ENCODE measurements at regions of chr10 and their contacts with region 1.

Region 1: GRCh38 chr10:35635576-35635975 is 6.5 kb downstream of the FZD8 start:
- DNase-seq: peak in 1 of 5 donors; percentile 29
- ATAC-seq: peak; percentile 56 to 73 (median 62)
- H3K4me3 ChIP-seq: no peak overlapping the region
- H3K27ac ChIP-seq: no peak overlapping the region
- H3K4me1 ChIP-seq: peaks cover 0 to 35% (median 10%) of the 10 kb centered on the region in 12 donors
- H3K27me3 ChIP-seq: peaks cover 0 to 22% (median 0%) of the 10 kb centered on the region in 9 donors
- CTCF ChIP-seq: peak; percentile 83 to 98 (median 92)
- POLR2A ChIP-seq: no peak

Region 2: DNA sequence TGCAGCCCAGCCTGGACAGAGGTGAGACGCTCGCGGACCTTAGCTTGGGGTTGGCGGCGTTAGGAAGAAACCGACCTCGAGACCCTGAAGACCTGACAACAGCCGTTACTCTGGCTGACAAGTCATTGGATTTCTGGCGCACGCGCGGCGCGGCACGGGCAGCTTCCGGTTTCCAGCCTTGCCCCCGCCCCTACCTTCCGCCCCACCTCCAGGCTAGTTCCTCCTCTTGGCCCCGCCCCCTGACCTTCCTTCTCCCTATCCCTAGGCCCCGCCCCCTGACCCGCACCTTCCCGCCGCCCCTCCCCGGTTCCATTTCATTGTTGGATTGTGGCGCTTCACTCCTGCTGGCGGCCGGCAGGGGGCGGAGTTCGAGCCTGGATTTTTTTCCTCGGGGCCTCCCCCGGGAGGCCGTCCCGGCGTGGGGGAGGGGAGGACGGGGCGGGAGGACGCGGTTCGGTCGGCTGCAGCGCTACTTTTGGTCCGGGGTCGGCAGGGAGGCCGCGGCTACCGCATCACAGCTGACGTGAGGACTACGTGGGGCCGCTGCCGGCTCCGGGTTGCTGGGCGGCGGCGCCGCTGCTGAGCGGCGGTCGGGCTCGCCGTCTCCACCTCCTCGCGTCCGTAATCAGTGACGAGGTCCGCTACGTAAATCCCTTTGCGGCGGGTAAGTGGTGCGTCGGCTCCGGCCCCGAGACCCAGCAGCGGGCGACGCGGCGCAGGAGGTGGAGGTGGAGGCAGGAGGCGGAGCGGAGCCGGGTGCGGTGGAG is 508.9 kb before region 1 on chr10 and contains the start of gene CREM:
- intact Hi-C with region 1: loop called in 1 of 10 experiments (anchors 10 kb)
- DNase-seq: peak; percentile 99 to 100 (median 100)
- ATAC-seq: peak; percentile 95 to 97 (median 96)
- H3K4me3 ChIP-seq: peak within 1 kb of the TSS; percentile 68 to 91 (median 84)
- H3K27ac ChIP-seq: peak within 1 kb of the TSS; percentile 97 to 100 (median 100)
- H3K4me1 ChIP-seq: peaks cover 0 to 44% (median 7%) of the 10 kb centered on the region in 12 donors
- H3K27me3 ChIP-seq: no peaks in the 10 kb centered on the region
- CTCF ChIP-seq: peak; percentile 71 to 96 (median 88)
- POLR2A ChIP-seq: peak; percentile 97 to 100
- total RNA-seq, gene CREM: 44.7 to 66.5 (median 54.7) TPM

Region 3: GRCh38 chr10:36504758-36505157 is 869.2 kb after region 1 on chr10:
- intact Hi-C with region 1: loop called in 8 of 10 experiments (anchors 5 to 10 kb)
- DNase-seq: no peak
- ATAC-seq: peak in 2 of 4 donors; percentile 26 to 45
- H3K4me3 ChIP-seq: no peak overlapping the region
- H3K27ac ChIP-seq: no peak overlapping the region
- H3K4me1 ChIP-seq: peaks cover 0 to 3% (median 0%) of the 10 kb centered on the region in 12 donors
- H3K27me3 ChIP-seq: no peaks in the 10 kb centered on the region
- CTCF ChIP-seq: peak in 7 of 12 donors; percentile 8 to 44 (median 36)
- POLR2A ChIP-seq: no peak

Region 4: DNA sequence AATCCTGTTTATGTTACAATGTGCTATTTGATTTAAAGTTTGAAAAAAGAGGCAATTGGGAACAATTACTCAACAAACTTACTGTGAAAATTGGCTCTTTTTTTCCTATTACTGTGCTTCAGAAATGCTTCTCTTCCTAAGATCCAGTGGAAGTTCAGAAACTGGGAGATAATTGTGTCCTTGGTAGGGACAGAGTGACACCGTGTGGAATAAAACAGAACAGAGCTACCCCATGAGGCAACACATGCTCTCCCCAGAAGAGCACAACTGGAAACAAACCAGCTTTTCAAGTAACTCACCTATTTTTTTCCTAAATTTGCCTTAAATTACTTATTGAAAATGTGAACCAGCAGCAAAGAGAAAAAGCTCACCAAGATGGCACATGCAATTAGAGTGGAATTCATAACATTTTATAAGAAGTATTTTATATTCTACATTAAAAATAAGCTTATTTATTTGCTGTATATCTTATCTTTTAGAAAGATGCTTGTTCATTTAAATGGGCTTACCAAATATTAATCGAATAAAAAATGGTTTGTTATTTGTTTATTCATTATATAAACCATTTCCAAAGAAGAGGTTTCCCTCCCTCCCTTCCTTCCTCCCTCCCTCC is 1143.8 kb after region 1 on chr10:
- intact Hi-C with region 1: loop called (anchors 1 to 2 kb)
- DNase-seq: peak in 2 of 5 donors; percentile 19 to 26
- ATAC-seq: peak; percentile 88 to 92 (median 92)
- H3K4me3 ChIP-seq: no peak overlapping the region
- H3K27ac ChIP-seq: no peak overlapping the region
- H3K4me1 ChIP-seq: peaks cover 0 to 7% (median 0%) of the 10 kb centered on the region in 12 donors
- H3K27me3 ChIP-seq: no peaks in the 10 kb centered on the region
- CTCF ChIP-seq: peak; percentile 51 to 86 (median 74)
- POLR2A ChIP-seq: no peak

Region 5: GRCh38 chr10:36880898-36881297 is 1245.3 kb after region 1 on chr10:
- intact Hi-C with region 1: loop called (anchors 2 to 10 kb)
- DNase-seq: no peak
- ATAC-seq: peak in 1 of 4 donors; percentile 46
- H3K4me3 ChIP-seq: no peak overlapping the region
- H3K27ac ChIP-seq: no peak overlapping the region
- H3K4me1 ChIP-seq: no peaks in the 10 kb centered on the region
- H3K27me3 ChIP-seq: peaks cover 0 to 8% (median 0%) of the 10 kb centered on the region in 9 donors
- CTCF ChIP-seq: peak in 11 of 12 donors; percentile 23 to 62 (median 44)
- POLR2A ChIP-seq: no peak

Measured in heart left ventricle (tissue), 16 donors.